OCI-LY7 (cell line): ENCODE measurements at regions of chr19 and their contacts with region 1.

Region 1: DNA sequence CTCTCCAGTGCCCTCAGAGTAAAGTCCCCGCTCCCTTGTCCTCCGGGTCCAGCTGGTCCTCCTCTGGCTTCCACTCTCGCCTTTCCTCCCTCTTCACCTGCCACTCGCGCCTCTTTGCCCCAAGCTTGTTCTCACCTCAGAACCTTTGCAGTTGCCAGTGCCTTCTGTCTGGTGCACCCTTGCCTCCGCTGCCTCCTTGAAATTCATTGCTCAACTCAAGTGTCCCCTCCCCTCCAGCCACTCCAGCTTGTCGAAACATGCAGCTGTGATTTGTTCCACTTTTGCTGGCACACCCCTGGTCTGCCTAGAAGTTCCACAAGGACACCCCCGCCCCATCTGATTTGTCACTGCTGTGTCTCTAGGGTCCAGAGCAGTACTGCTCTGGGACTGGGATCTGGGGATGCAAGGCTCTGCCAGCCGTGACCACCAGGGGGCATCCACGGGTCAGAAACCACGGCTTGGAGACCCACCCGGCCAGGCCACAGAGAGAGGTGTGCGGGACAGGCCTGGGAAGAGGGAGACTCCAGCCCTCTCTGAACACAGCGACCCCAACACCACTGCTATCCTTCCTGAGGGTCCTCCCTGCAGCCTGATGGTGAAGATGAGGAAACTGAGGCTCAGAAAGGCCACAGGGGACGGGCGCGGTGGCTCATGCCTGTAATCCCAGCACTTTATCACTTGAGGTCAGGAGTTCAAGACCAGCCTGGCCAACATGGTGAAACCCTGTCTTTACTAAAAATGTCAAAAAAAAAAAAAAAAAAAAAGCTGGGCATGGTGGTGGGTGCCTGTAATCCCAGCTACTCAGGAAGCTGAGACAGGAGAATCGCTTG is 49.9 kb downstream of the AP1M1 start:
- DNase-seq: peak; percentile 85
- H3K4me3 ChIP-seq: no peak overlapping the region
- H3K27ac ChIP-seq: no peak overlapping the region
- H3K4me1 ChIP-seq: peaks cover 9% of the 10 kb centered on the region
- CTCF ChIP-seq: peak; percentile 95

Region 2: DNA sequence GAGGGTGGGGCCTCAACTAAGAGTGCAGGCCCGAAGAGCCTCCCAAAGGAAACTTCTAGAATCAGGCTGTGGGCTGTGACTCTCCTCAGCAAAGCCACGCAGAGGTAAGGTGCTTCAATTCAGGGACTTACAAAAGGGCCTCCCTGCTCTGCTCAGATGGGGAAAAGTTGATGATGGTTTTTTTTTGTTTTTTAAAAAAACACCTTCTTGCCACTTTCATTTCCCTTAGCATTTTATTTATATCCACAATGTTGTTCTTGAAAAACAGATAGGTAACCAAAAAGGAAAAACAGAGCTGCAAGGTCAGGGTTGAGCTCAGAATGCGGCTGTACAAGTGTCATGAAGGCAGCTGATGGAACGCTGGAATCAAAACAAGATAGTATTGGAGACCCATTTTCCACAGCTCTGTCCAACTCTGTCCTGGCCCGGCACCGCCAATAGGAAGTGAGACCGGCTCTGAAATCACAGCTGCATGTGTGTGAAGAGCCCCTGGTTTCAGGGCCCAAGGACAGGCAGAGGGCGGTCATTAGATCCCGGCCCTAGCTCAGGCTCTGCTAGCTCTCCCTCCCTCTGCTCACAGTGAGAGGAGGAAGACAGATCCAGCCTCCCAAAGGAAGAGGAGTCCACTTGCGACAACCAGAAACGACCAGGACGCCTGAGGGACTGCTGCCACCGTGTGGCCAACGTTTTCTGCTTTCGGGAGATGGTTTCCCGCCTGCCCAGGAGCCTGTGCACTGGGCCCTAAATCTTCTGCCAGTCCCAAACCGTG is 135.4 kb after region 1 on chr19:
- CTCF ChIA-PET with region 1: interaction called, 9 read pairs
- POLR2A ChIA-PET with region 1: interaction called, 8 read pairs
- intact Hi-C with region 1: loop called (anchors 1 kb)
- DNase-seq: peak; percentile 82
- H3K4me3 ChIP-seq: peak overlapping the region; percentile 15
- H3K27ac ChIP-seq: peak overlapping the region; percentile 61
- H3K4me1 ChIP-seq: peaks cover 30% of the 10 kb centered on the region
- CTCF ChIP-seq: peak; percentile 91

Region 3: DNA sequence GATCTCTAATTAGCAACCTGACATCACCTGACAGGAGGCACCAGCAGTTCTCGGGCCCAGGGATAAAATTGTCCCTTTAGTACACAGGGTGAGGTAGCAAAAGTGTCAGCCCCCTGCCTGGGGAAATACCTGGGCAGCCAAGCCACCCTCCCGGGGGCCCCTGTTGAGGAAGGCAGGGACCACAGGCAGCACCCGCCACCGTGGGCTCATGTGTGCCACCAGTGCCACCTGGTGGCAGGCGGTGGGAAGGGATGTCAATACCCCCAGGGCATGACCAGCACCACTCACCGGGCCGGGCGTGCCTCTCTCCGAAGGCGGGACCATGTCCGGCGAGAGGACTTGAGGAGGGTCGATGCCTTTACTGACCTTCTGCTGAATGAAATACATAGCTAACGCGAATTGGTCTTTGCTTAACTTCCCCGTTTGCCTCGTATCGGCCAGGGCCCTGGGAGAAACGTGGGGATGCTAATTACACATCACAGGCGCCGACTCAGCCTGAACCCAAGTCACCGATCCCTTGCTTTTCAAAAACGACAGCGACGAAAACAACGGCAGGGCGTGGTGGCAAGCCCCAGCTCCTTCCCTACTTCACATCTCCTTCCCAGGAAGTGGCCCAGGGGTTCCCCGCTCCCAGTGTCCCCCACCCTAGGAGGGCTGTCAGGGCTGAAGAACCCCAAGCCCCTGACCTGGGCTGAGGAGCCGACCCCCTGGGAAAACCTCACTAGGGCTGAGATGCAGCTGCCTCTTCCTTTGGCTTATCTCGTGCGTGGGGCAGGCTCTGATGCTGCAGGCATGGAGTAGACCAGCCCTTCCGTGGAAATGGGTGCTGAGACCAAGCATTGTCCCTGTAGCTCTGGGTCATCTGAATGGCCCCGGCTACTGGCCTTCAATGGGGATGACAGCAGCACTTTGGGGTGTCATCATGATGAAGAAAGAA is 170.4 kb after region 1 on chr19:
- CTCF ChIA-PET with region 1: no interaction called
- POLR2A ChIA-PET with region 1: no interaction called
- intact Hi-C with region 1: loop called (anchors 1 kb)
- DNase-seq: peak; percentile 79
- H3K4me3 ChIP-seq: no peak overlapping the region
- H3K27ac ChIP-seq: no peak overlapping the region
- H3K4me1 ChIP-seq: peaks cover 4% of the 10 kb centered on the region
- CTCF ChIP-seq: peak; percentile 91